Posterior vena cava (tissue), 2 donors: ENCODE measurements at regions of chr7 and their contacts with region 1.

Region 1: GRCh38 chr7:146926841-146927240 is 810.2 kb downstream of the CNTNAP2 start:
- DNase-seq: no peak

Region 2: GRCh38 chr7:145398758-145399157 is 1528.1 kb before region 1 on chr7:
- intact Hi-C with region 1: loop called in 1 of 2 experiments (anchors 10 kb)
- DNase-seq: no peak

Region 3: DNA sequence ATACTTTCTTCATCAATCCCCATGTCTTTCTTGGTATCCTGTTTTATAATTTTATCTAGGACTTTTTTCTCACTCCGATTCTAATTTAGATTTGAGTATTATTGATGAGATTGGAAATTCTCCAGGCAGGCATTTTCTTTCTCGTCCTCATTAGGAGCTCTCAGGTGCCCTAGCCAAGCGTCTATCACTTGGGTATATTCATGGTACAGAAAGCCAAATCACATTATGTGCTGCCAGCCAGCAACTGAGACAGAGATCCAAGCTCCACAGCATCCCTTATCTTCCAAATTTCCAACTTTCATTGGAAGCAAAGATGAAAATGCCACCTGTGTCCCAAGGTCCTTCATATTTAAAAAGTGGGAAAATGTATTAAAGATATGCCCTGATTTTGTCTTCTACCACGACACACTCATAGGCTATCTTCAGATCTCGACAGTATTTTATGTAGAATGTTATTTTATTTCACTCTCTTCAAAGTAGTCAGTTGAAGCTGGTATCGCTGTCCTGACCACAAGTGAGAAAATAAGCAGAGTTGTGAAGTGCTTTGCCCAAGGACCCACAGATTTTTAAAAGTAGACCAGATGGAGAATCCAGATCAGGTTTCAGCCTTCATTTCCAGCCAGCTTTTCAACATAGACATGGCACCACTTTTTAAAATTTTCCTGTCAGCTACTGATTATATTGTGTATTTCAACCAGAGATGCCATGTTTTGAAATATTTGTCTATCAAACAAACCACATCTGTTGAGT is 36.9 kb before region 1 on chr7:
- intact Hi-C with region 1: no loop called
- DNase-seq: no peak

Region 4: GRCh38 chr7:146966274-146966673 is 39.4 kb after region 1 on chr7:
- intact Hi-C with region 1: no loop called
- DNase-seq: no peak